ENCODE measurements at regions of chr1 and their contacts with region 1.

Region 1: GRCh38 chr1:21368515-21369289 is 71.2 kb upstream of the NBPF3 start:
- DNase-seq: peak; percentile 59
- H3K4me3 ChIP-seq: no peak overlapping the region
- H3K27ac ChIP-seq: no peak overlapping the region
- H3K4me1 ChIP-seq: peaks cover 4% of the 10 kb centered on the region
- H3K27me3 ChIP-seq: no peaks in the 10 kb centered on the region
- CTCF ChIP-seq: peak; percentile 96 to 100

Region 2: DNA sequence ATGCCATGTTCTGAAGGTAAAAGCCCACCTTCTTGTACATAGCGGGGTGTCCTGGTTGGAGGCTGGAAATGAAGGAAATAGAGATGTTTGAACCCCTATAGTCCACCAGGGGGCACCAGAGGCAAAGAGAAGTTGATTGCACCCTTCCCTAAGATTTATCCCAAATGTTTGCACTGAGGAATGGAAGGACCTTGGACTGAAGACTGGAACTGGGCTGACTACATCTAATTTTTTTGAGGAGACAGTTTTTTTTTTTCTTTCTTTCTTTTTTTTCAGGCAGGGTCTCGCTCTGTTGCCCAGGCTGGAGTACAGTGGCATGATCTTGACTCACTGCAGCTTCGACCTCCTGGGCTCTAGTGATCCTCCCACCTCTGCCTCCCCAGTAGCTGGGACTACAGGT is 136.7 kb before region 1 on chr1:
- CTCF ChIA-PET with region 1: no interaction called
- dilution Hi-C with region 1: loop called (anchors 5 kb)
- in situ Hi-C with region 1: no loop called
- intact Hi-C with region 1: loop called (anchors 1 kb)
- DNase-seq: peak; percentile 26
- H3K4me3 ChIP-seq: no peak overlapping the region
- H3K27ac ChIP-seq: no peak overlapping the region
- H3K4me1 ChIP-seq: no peaks in the 10 kb centered on the region
- H3K27me3 ChIP-seq: no peaks in the 10 kb centered on the region
- CTCF ChIP-seq: peak; percentile 50 to 69

Region 3: DNA sequence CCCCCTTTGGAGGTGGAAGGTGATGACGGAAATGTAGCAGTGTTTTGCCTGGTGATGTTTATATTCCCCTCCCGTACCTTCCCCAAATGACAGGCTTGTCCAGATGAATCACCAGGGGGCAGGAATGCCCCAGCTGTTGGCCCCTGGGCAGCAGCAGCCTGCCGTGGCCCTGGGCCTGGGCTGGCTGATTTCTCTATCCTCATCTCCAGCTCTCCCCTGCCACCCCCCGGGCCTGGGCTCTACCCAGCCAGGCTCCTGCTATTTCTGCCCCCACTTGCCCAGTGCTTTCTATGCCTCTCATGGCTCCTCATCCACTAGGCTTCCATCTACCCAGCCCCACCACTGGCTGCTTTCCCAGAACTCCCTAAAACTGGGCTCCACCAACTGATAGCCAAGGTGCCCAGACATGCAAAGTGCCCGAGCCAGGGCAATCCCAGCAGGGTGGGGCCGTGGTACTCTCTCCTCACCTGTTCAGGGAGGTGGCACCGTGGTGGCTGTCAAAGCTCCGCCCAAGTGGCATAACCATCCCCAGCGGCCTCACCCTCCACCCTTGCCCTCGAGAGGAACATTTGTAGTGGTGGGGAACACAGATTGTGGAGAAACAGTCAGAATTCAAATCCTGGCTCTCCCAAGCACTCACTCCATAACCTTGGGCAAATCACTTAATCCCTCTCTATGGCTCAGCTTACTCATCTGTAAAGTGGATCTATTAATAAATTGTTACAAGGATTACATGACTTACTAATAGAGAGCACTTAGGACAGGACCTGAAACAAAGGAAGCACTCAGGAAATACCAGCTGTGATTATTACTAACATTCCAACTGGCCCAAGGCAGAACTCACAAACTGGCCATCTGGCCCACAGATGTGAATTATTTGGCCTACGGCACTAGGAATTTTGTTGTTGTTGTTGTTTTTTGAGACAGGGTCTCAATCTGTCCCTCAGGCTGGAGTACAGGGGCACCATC is 65.7 kb before region 1 on chr1:
- CTCF ChIA-PET with region 1: no interaction called
- dilution Hi-C with region 1: no loop called
- in situ Hi-C with region 1: no loop called
- intact Hi-C with region 1: loop called (anchors 1 kb)
- DNase-seq: peak; percentile 76
- H3K4me3 ChIP-seq: no peak overlapping the region
- H3K27ac ChIP-seq: peak overlapping the region; percentile 53
- H3K4me1 ChIP-seq: peaks cover 45% of the 10 kb centered on the region
- H3K27me3 ChIP-seq: no peaks in the 10 kb centered on the region
- CTCF ChIP-seq: peak in 1 of 2 donors; percentile 36

Region 4: GRCh38 chr1:21478974-21479373 is 110.3 kb after region 1 on chr1:
- CTCF ChIA-PET with region 1: no interaction called
- dilution Hi-C with region 1: no loop called
- in situ Hi-C with region 1: no loop called
- intact Hi-C with region 1: no loop called
- DNase-seq: no peak
- H3K4me3 ChIP-seq: no peak overlapping the region
- H3K27ac ChIP-seq: no peak overlapping the region
- H3K4me1 ChIP-seq: no peaks in the 10 kb centered on the region
- H3K27me3 ChIP-seq: no peaks in the 10 kb centered on the region
- CTCF ChIP-seq: no peak

Region 5: GRCh38 chr1:21490774-21491553 is 122.3 kb after region 1 on chr1:
- CTCF ChIA-PET with region 1: interaction called, 11 read pairs
- dilution Hi-C with region 1: no loop called
- in situ Hi-C with region 1: no loop called
- intact Hi-C with region 1: loop called (anchors 1 kb)
- DNase-seq: peak; percentile 56
- H3K4me3 ChIP-seq: no peak overlapping the region
- H3K27ac ChIP-seq: no peak overlapping the region
- H3K4me1 ChIP-seq: no peaks in the 10 kb centered on the region
- H3K27me3 ChIP-seq: no peaks in the 10 kb centered on the region
- CTCF ChIP-seq: peak; percentile 61 to 74

Region 6: GRCh38 chr1:21594935-21595897 is 226.5 kb after region 1 on chr1:
- CTCF ChIA-PET with region 1: no interaction called
- dilution Hi-C with region 1: no loop called
- in situ Hi-C with region 1: no loop called
- intact Hi-C with region 1: loop called (anchors 1 kb)
- DNase-seq: peak; percentile 26
- H3K4me3 ChIP-seq: no peak overlapping the region
- H3K27ac ChIP-seq: no peak overlapping the region
- H3K4me1 ChIP-seq: peaks cover 9% of the 10 kb centered on the region
- H3K27me3 ChIP-seq: no peaks in the 10 kb centered on the region
- CTCF ChIP-seq: peak; percentile 81

Measured in mammary epithelial cell (primary cell).